ENCODE measurements at regions of chr7 and their contacts with region 1.

Region 1: GRCh38 chr7:122515404-122515803 is 183.5 kb downstream of the RNF133 start:
- DNase-seq: no peak
- CTCF ChIP-seq: no peak

Region 2: DNA sequence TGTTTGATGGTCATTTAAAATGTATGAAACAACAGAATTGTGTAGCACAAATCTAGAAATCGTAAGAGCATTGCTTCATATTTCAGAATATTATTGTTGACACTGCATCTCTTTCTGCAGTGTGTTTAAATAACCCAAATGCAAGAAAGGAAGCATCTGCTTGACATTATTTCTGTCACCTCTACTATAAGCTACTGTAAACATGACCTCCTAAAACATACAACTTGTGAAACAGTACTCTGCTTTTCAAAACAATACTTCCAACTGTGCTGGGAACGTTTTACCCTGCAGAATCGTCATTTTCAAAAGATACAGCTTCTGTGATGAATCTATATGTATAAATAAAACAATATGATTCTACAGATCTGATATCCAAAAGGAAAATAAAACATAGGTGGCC is 101.5 kb after region 1 on chr7:
- in situ Hi-C with region 1: loop called (anchors 25 kb)
- DNase-seq: no peak
- CTCF ChIP-seq: no peak